Activated CD4-positive, alpha-beta T cell treated with anti-CD3 and anti-CD28 coated beads for 36 hours (primary cell): ENCODE measurements at regions of chr4 and their contacts with region 1.

Region 1: GRCh38 chr4:68498413-68499007 is 51.2 kb downstream of the TMPRSS11E start:
- DNase-seq: peak; percentile 79
- ATAC-seq: peak; percentile 84
- H3K4me3 Mint-ChIP-seq: no peak overlapping the region
- H3K27ac Mint-ChIP-seq: no peak overlapping the region
- H3K4me1 Mint-ChIP-seq: peaks cover 3% of the 10 kb centered on the region
- H3K27me3 Mint-ChIP-seq: no peaks in the 10 kb centered on the region

Region 2: GRCh38 chr4:68240618-68241017 is 257.9 kb before region 1 on chr4:
- CTCF ChIA-PET with region 1: no interaction called
- POLR2A ChIA-PET with region 1: no interaction called
- intact Hi-C with region 1: no loop called
- DNase-seq: no peak
- ATAC-seq: no peak
- H3K4me3 Mint-ChIP-seq: no peak overlapping the region
- H3K27ac Mint-ChIP-seq: no peak overlapping the region
- H3K4me1 Mint-ChIP-seq: no peaks in the 10 kb centered on the region
- H3K27me3 Mint-ChIP-seq: peaks cover 23% of the 10 kb centered on the region

Region 3: GRCh38 chr4:68617003-68617698 is 118.6 kb after region 1 on chr4:
- CTCF ChIA-PET with region 1: no interaction called
- POLR2A ChIA-PET with region 1: no interaction called
- intact Hi-C with region 1: loop called in 1 of 2 experiments (anchors 10 kb)
- DNase-seq: no peak
- ATAC-seq: no peak
- H3K4me3 Mint-ChIP-seq: no peak overlapping the region
- H3K27ac Mint-ChIP-seq: no peak overlapping the region
- H3K4me1 Mint-ChIP-seq: no peaks in the 10 kb centered on the region
- H3K27me3 Mint-ChIP-seq: no peaks in the 10 kb centered on the region

Region 4: GRCh38 chr4:68673143-68673542 is 174.6 kb after region 1 on chr4:
- CTCF ChIA-PET with region 1: no interaction called
- POLR2A ChIA-PET with region 1: no interaction called
- intact Hi-C with region 1: no loop called
- DNase-seq: no peak
- ATAC-seq: no peak
- H3K4me3 Mint-ChIP-seq: no peak overlapping the region
- H3K27ac Mint-ChIP-seq: no peak overlapping the region
- H3K4me1 Mint-ChIP-seq: no peaks in the 10 kb centered on the region
- H3K27me3 Mint-ChIP-seq: no peaks in the 10 kb centered on the region

Region 5: GRCh38 chr4:69167300-69167699 is 668.8 kb after region 1 on chr4:
- CTCF ChIA-PET with region 1: interaction called, 4 read pairs
- POLR2A ChIA-PET with region 1: no interaction called
- intact Hi-C with region 1: loop called (anchors 1 kb)
- DNase-seq: no peak
- ATAC-seq: no peak
- H3K4me3 Mint-ChIP-seq: no peak overlapping the region
- H3K27ac Mint-ChIP-seq: no peak overlapping the region
- H3K4me1 Mint-ChIP-seq: no peaks in the 10 kb centered on the region
- H3K27me3 Mint-ChIP-seq: peaks cover 2% of the 10 kb centered on the region